ENCODE measurements at regions of chr6 and their contacts with region 1.

Region 1: DNA sequence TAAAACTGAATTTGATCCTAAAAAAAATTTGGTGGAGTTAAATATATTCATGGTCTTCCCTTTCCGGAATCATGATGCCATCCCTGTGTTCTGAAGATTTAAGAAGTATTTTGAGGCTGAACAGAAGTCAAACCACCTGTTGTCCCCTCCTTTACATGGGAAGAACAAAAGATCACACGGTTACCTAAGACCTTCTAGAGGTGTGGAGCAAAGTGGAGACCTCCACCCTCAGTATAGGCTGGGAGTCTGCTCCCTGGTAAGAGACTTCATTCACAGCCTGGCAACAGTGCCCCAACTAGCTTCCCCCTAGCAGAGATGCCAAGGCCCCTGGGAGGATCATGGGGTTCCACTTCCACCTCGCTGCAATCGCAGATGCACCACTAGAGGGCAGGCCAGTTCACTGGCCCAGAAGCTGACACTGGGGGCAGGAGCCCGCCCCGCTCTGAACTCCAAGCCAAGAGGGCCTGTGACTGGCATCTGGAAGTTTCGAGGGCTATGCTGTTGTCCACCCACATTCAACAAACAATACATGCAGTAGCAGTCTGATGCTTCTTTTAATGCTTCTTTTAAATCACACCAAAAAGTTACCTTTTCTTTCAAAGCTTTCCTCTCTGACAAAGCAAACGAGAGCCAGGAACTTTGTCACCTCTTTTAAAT is 19.5 kb upstream of the UBE2J1 start:
- DNase-seq: peak; percentile 90
- ATAC-seq: peak; percentile 80
- H3K4me3 Mint-ChIP-seq: no peak overlapping the region
- H3K27ac Mint-ChIP-seq: no peak overlapping the region
- H3K4me1 Mint-ChIP-seq: peaks cover 20% of the 10 kb centered on the region
- H3K27me3 Mint-ChIP-seq: no peaks in the 10 kb centered on the region
- CTCF ChIP-seq: peak; percentile 87

Region 2: DNA sequence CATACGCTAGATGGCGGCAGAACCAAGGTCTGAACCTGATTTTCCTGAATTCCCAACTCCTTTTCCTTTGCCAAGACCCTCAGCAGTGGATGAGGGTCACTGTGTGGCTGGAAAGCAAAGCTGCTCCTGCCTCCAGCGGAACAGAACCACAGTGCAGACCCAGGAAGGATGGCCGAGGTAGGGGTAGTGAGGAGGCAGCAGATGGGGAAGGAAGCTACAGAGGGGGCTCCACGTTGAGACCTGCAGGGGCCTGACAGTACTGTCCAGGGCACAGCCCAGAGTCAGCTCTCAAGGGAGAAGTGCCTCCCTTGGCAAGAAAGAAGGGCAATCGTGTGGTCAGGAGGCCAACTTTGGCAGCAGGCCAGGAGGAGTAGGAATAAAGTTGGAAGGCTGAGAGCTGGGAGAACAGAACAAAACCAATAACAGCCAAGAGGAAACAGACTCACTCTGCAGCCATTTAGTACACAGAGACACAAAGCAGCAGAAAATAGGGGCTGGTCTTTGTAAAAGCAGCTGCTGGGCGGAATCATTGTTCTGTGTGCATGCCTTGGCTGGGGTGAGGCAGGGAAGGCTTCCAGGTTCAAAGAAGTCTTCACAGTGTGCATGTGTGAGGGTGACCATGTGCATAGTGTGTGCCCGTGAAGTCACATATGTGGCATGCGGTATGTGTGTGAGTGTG is 60.0 kb before region 1 on chr6:
- CTCF ChIA-PET with region 1: interaction called, 66 read pairs
- POLR2A ChIA-PET with region 1: no interaction called
- DNase-seq: peak; percentile 70
- ATAC-seq: peak; percentile 98
- H3K4me3 Mint-ChIP-seq: no peak overlapping the region
- H3K27ac Mint-ChIP-seq: peak overlapping the region; percentile 59; the same call in 1 of the 2 replicates
- H3K4me1 Mint-ChIP-seq: peaks cover 26% of the 10 kb centered on the region
- H3K27me3 Mint-ChIP-seq: no peaks in the 10 kb centered on the region
- CTCF ChIP-seq: 0 out of 2 replicates have a peak, but pooled peaks have one; percentile 8

Region 3: DNA sequence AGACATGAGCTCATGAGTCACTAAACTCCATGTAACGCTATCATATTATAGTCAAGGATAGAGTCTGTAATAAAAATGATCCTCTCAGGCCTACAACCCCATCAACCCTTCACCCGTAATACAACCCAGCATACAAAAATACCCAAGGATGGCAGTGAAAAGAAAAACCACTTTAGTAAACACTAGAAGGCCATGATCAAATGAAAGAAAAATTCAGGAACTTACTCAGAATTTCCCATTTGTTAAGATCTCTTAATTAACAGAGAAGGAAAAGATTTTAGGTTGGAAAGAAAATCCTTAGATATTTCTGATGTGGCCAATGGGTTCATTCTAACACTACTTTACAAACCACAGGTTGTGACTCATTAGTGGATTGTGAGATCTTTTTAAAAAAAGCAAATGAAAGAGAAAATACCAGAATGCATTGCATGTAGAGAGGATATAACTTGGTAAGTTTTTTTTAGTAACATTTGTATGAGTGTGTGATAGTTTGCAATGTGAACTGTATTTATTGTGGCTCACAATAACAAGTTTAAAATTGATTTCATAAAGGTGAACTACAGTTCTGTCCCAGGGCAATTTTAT is 11.5 kb before region 1 on chr6:
- CTCF ChIA-PET with region 1: interaction called, 17 read pairs
- POLR2A ChIA-PET with region 1: interaction called, 4 read pairs
- DNase-seq: no peak
- ATAC-seq: no peak
- H3K4me3 Mint-ChIP-seq: no peak overlapping the region
- H3K27ac Mint-ChIP-seq: no peak overlapping the region
- H3K4me1 Mint-ChIP-seq: peaks cover 5% of the 10 kb centered on the region; the same call in 1 of the 2 replicates
- H3K27me3 Mint-ChIP-seq: peaks cover 19% of the 10 kb centered on the region
- CTCF ChIP-seq: no peak

Region 4: GRCh38 chr6:89412071-89413005 is 40.4 kb after region 1 on chr6 and contains the start of gene RRAGD:
- CTCF ChIA-PET with region 1: interaction called, 34 read pairs
- POLR2A ChIA-PET with region 1: interaction called, 3 read pairs
- DNase-seq: peak; percentile 50
- ATAC-seq: peak; percentile 38
- H3K4me3 Mint-ChIP-seq: peak within 1 kb of the TSS; percentile 86
- H3K27ac Mint-ChIP-seq: no peak within 1 kb of the TSS
- H3K4me1 Mint-ChIP-seq: peaks cover 35% of the 10 kb centered on the region
- H3K27me3 Mint-ChIP-seq: peaks cover 36% of the 10 kb centered on the region
- CTCF ChIP-seq: no peak
- total RNA-seq, gene RRAGD: 14.1 to 25.4 TPM (median 18.0 TPM) in 3 replicates

Region 5: GRCh38 chr6:89501249-89501621 is 129.3 kb after region 1 on chr6:
- CTCF ChIA-PET with region 1: interaction called, 18 read pairs
- POLR2A ChIA-PET with region 1: no interaction called
- DNase-seq: no peak
- ATAC-seq: peak; percentile 93
- H3K4me3 Mint-ChIP-seq: peak overlapping the region; percentile 20; the same call in 1 of the 2 replicates
- H3K27ac Mint-ChIP-seq: peak overlapping the region; percentile 61; the same call in 1 of the 2 replicates
- H3K4me1 Mint-ChIP-seq: peaks cover 35% of the 10 kb centered on the region
- H3K27me3 Mint-ChIP-seq: peaks cover 12% of the 10 kb centered on the region
- CTCF ChIP-seq: no peak

Region 6: GRCh38 chr6:89610149-89610642 is 238.2 kb after region 1 on chr6:
- CTCF ChIA-PET with region 1: interaction called, 18 read pairs
- POLR2A ChIA-PET with region 1: no interaction called
- DNase-seq: peak; percentile 86
- ATAC-seq: peak; percentile 77
- H3K4me3 Mint-ChIP-seq: no peak overlapping the region
- H3K27ac Mint-ChIP-seq: no peak overlapping the region
- H3K4me1 Mint-ChIP-seq: 0 out of 2 replicates have a peak, but pooled peaks cover 2% of the 10 kb centered on the region
- H3K27me3 Mint-ChIP-seq: no peaks in the 10 kb centered on the region
- CTCF ChIP-seq: peak; percentile 83

Measured in WTC11 (cell line).